ENCODE measurements at regions of chr11 and their contacts with region 1.

Region 1: GRCh38 chr11:58579192-58580129 is 598 bp downstream of the ZFP91 start:
- DNase-seq: peak; percentile 91 to 97
- ATAC-seq: peak; percentile 32 to 67 (median 47)
- H3K4me3 ChIP-seq: peak overlapping the region; percentile 90
- H3K4me3 Mint-ChIP-seq: peak overlapping the region; percentile 91
- H3K27ac ChIP-seq: peak overlapping the region; percentile 99
- H3K27ac Mint-ChIP-seq: peak overlapping the region; percentile 99 to 100
- H3K4me1 ChIP-seq: peaks cover 29% of the 10 kb centered on the region
- H3K4me1 Mint-ChIP-seq: peaks cover 77 to 81% of the 10 kb centered on the region in 2 donors
- H3K27me3 ChIP-seq: no peaks in the 10 kb centered on the region
- H3K27me3 Mint-ChIP-seq: peaks cover 0 to 3% of the 10 kb centered on the region in 2 donors
- CTCF ChIP-seq: peak; percentile 80

Region 2: DNA sequence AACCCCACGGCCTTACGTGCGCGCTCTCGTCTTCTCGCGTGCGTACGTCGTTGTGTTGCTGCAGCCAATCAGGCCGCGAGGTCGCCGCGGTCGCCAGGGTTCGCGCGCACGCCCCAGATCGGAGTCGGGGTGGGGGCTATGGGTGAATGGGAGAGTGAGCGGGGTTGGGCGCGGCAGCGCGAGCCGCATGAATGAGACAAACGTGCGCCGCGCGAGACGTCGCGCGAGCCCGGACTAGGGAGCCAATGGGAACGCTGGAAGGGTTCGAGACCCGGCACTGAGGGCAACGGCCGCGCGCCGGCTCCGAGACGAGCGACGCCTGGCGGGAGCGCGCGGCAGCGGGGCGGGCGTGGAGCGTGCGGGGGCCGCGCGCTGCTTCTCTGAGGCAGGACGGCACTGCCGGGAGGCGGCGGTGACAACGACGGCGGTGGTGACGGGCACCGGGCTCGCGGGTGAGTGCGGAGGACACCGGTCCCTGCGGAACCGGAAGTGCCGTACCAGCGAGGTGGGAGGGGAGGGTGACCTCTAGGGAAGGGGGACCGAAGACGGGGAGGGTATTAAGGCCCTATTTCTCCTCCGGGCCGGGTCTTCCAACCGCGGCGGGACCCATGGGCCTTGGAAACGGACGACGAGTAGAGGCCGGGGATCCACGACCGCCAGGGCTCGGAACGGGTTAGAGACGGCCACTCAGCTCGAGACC is 911.6 kb before region 1 on chr11 and contains the start of gene ZDHHC5:
- intact Hi-C with region 1: loop called (anchors 1 kb)
- DNase-seq: peak; percentile 99 to 100
- ATAC-seq: peak; percentile 79 to 95 (median 82)
- H3K4me3 ChIP-seq: peak within 1 kb of the TSS; percentile 97
- H3K4me3 Mint-ChIP-seq: peak within 1 kb of the TSS; percentile 97
- H3K27ac ChIP-seq: peak within 1 kb of the TSS; percentile 95
- H3K27ac Mint-ChIP-seq: peak within 1 kb of the TSS; percentile 97 to 98
- H3K4me1 ChIP-seq: peaks cover 19% of the 10 kb centered on the region
- H3K4me1 Mint-ChIP-seq: peaks cover 44 to 58% of the 10 kb centered on the region in 2 donors
- H3K27me3 ChIP-seq: no peaks in the 10 kb centered on the region
- H3K27me3 Mint-ChIP-seq: no peaks in the 10 kb centered on the region
- CTCF ChIP-seq: peak; percentile 53
- total RNA-seq, gene ZDHHC5: 46.1 to 64.0 (median 55.5) TPM

Region 3: DNA sequence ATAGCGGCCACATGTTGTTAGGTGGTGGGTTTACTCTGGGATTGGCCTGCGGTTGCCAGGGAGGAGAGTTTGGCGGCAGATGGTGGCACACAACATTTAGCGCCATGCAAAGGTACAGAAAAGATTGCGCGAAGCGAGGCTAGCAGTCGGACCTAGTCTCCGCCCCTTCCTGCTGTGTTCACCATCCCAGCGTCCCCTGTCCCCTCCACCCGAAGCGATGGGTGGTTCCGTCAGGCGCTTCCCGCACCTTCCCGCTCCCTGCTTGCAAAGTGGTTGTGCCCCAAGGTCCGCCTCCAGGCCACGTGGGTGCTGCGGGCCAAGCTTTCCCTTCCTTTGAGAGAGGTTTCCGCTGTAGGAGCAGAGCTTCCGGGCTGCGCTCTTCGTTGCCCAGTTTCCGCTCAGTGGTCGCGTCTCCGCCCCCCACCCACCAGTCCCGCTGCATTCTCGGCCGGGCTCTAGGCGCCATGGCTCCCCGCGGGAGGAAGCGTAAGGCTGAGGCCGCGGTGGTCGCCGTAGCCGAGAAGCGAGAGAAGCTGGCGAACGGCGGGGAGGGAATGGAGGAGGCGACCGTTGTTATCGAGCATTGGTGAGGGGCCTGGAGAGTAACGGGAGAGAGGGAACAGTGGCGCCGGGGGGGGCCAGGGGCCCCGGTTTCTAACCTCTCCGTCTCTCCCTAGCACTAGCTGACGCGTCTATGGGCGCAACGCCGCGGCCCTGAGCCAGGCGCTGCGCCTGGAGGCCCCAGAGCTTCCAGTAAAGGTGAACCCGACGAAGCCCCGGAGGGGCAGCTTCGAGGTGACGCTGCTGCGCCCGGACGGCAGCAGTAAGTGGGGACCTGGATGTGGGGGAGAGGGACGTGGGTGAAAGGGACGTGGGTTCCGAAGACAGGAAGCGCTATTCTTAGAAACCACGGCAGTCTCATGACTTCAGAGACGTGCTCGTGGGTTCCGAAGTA is 838.1 kb before region 1 on chr11 and contains the start of gene SELENOH:
- intact Hi-C with region 1: loop called (anchors 2 kb)
- DNase-seq: peak; percentile 81 to 96
- ATAC-seq: peak; percentile 84 to 91 (median 86)
- H3K4me3 ChIP-seq: peak within 1 kb of the TSS; percentile 94
- H3K4me3 Mint-ChIP-seq: peak within 1 kb of the TSS; percentile 99
- H3K27ac ChIP-seq: peak within 1 kb of the TSS; percentile 97
- H3K27ac Mint-ChIP-seq: peak within 1 kb of the TSS; percentile 99
- H3K4me1 ChIP-seq: peaks cover 17% of the 10 kb centered on the region
- H3K4me1 Mint-ChIP-seq: peaks cover 18 to 30% of the 10 kb centered on the region in 2 donors
- H3K27me3 ChIP-seq: no peaks in the 10 kb centered on the region
- H3K27me3 Mint-ChIP-seq: no peaks in the 10 kb centered on the region
- CTCF ChIP-seq: no peak
- total RNA-seq, gene SELENOH: 55.3 to 83.3 (median 61.0) TPM

Region 4: GRCh38 chr11:58524232-58525036 is 55.0 kb before region 1 on chr11:
- intact Hi-C with region 1: loop called (anchors 2 kb)
- DNase-seq: peak; percentile 22 to 87
- ATAC-seq: peak; percentile 68 to 75 (median 70)
- H3K4me3 ChIP-seq: peak overlapping the region; percentile 7
- H3K4me3 Mint-ChIP-seq: peak overlapping the region; percentile 77
- H3K27ac ChIP-seq: peak overlapping the region; percentile 81
- H3K27ac Mint-ChIP-seq: peak overlapping the region; percentile 85 to 92
- H3K4me1 ChIP-seq: peaks cover 14% of the 10 kb centered on the region
- H3K4me1 Mint-ChIP-seq: peaks cover 22 to 30% of the 10 kb centered on the region in 2 donors
- H3K27me3 ChIP-seq: no peaks in the 10 kb centered on the region
- H3K27me3 Mint-ChIP-seq: no peaks in the 10 kb centered on the region
- CTCF ChIP-seq: peak; percentile 90

Region 5: GRCh38 chr11:58597486-58598144 is 18.2 kb after region 1 on chr11:
- intact Hi-C with region 1: no loop called
- DNase-seq: peak in 1 of 2 donors; percentile 10
- ATAC-seq: no peak
- H3K4me3 ChIP-seq: no peak overlapping the region
- H3K4me3 Mint-ChIP-seq: no peak overlapping the region
- H3K27ac ChIP-seq: no peak overlapping the region
- H3K27ac Mint-ChIP-seq: peak overlapping the region; percentile 57 to 68
- H3K4me1 ChIP-seq: no peaks in the 10 kb centered on the region
- H3K4me1 Mint-ChIP-seq: peaks cover 64 to 74% of the 10 kb centered on the region in 2 donors
- H3K27me3 ChIP-seq: no peaks in the 10 kb centered on the region
- H3K27me3 Mint-ChIP-seq: no peaks in the 10 kb centered on the region
- CTCF ChIP-seq: no peak

Region 6: GRCh38 chr11:58719406-58720117 is 140.1 kb after region 1 on chr11:
- intact Hi-C with region 1: no loop called
- DNase-seq: no peak
- ATAC-seq: no peak
- H3K4me3 ChIP-seq: no peak overlapping the region
- H3K4me3 Mint-ChIP-seq: no peak overlapping the region
- H3K27ac ChIP-seq: no peak overlapping the region
- H3K27ac Mint-ChIP-seq: no peak overlapping the region
- H3K4me1 ChIP-seq: no peaks in the 10 kb centered on the region
- H3K4me1 Mint-ChIP-seq: no peaks in the 10 kb centered on the region
- H3K27me3 ChIP-seq: no peaks in the 10 kb centered on the region
- H3K27me3 Mint-ChIP-seq: peaks cover 5 to 8% of the 10 kb centered on the region in 2 donors
- CTCF ChIP-seq: no peak

Region 7: DNA sequence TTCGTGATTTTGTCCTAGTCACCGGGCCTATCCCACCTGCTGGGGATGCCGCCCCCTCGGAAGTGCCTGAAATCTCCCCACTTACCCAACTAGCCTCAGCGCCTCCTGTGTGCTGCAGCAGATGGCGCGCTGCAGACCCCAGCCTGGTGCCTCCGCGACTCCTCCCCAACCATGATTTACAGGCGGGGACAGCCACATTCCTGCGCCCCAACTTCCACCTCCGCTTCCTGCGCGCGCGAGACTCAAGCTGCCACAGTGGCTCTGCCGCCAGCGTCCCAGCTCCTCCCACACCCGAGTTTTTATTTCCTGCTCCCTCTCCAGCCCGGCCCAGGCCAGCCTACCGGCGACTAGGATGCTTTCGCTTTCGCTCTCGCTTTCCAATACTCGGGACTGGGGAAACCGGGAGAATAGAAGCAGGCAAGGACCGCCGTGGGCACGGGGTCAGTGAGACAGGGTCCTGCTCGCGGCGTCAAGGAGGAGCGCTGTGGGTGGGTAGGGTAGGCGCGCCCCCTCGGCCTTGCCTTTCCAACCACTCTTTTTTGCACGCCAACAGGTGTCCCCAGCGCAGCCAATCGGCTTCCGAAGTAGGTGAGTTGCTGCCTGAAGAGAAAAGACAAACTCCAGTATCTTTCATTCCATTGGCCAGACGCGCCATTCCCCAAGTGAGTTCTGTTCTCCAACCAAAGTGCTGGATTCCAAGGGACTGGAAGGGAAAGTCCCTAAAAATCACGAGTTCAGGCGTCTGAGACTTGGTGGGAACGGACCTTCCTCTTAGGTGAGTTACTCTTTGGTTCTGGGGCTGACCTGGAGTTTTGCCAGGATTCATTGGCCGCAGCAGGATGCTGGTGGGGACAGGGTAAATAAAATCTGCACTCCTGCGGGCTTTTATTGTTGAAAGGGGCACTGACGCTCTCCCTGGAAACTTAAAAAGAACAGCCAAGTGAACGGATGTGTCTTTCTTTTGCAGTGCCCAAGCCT is 563.4 kb after region 1 on chr11 and contains the start of gene FAM111A:
- intact Hi-C with region 1: loop called (anchors 2 kb)
- DNase-seq: peak; percentile 75 to 94
- ATAC-seq: peak; percentile 83 to 92 (median 85)
- H3K4me3 ChIP-seq: peak within 1 kb of the TSS; percentile 88
- H3K4me3 Mint-ChIP-seq: peak within 1 kb of the TSS; percentile 100
- H3K27ac ChIP-seq: peak within 1 kb of the TSS; percentile 94
- H3K27ac Mint-ChIP-seq: peak within 1 kb of the TSS; percentile 95 to 98
- H3K4me1 ChIP-seq: peaks cover 18% of the 10 kb centered on the region
- H3K4me1 Mint-ChIP-seq: peaks cover 50 to 52% of the 10 kb centered on the region in 2 donors
- H3K27me3 ChIP-seq: no peaks in the 10 kb centered on the region
- H3K27me3 Mint-ChIP-seq: no peaks in the 10 kb centered on the region
- CTCF ChIP-seq: no peak
- total RNA-seq, gene FAM111A: 93.7 to 125 (median 102) TPM